Activated B cell treated with CpG ODN at 0.5 μM for 24 hours (primary cell): ENCODE measurements at regions of chr20 and their contacts with region 1.

Region 1: DNA sequence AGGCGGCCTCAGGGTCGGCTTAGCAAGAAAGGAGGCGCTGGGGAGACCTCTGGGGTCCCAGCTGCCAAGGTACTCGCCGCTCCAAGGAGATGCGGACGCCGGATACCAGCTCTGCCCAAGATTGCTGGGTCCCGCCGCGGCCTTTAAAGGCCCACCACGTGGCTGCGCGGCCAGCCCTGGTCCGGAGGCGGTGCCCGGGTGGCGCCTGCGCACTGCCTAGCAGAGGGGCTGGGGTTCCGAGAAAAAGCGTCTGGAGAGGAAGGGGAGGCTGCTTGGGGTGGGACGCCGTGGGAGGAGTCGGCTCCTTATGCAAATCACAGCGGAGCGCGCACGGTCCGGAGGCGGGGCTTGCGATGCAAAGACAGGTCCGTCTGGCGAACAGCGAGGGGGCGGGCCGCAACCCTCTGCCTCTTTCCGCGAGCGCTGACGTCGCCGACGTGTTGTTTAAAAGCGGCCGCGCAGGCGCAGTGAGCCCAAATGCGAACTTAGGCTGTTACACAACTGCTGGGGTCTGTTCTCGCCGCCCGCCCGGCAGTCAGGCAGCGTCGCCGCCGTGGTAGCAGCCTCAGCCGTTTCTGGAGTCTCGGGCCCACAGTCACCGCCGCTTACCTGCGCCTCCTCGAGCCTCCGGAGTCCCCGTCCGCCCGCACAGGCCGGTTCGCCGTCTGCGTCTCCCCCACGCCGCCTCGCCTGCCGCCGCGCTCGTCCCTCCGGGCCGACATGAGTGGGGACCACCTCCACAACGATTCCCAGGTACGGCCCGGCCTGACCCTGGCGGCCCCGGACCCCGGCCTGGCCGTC is at the start of gene TOP1:
- DNase-seq: peak; percentile 98
- ATAC-seq: peak; percentile 98
- H3K4me3 Mint-ChIP-seq: peak within 1 kb of the TSS; percentile 93
- H3K27ac Mint-ChIP-seq: peak within 1 kb of the TSS; percentile 90
- H3K4me1 Mint-ChIP-seq: peaks cover 57% of the 10 kb centered on the region
- H3K27me3 Mint-ChIP-seq: no peaks in the 10 kb centered on the region
- CTCF ChIP-seq: no peak
- total RNA-seq, gene TOP1: 62.7 and 63.3 TPM in 2 replicates

Region 2: GRCh38 chr20:40880063-40880728 is 148.4 kb before region 1 on chr20:
- CTCF ChIA-PET with region 1: no interaction called
- POLR2A ChIA-PET with region 1: no interaction called
- intact Hi-C with region 1: no loop called
- DNase-seq: no peak
- ATAC-seq: no peak
- H3K4me3 Mint-ChIP-seq: no peak overlapping the region
- H3K27ac Mint-ChIP-seq: no peak overlapping the region
- H3K4me1 Mint-ChIP-seq: no peaks in the 10 kb centered on the region
- H3K27me3 Mint-ChIP-seq: no peaks in the 10 kb centered on the region
- CTCF ChIP-seq: no peak

Region 3: DNA sequence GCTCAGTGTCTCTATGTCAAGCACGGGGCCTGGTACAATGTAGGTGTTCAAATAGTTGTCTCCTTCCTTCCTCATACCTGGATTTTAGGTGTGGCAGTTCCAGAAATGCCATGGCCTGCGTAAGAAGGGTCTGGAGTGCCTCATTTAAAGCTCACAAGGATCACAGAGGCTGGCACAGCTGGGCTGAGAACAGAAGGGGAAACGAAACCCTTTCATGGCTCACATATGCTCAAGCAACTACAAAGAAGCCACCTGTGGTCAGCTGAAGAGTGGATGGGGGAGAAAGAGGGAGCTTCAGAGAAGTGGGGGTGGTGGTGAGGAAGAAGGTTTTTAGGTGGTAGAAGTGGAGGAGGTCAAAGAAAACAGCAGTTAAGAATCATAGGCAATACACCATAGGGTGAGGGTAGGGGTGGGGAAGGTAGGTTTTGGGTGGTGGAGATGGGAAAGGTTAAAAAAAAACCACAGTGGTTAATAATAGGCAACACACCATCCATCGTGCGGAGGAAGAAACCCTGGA is 16.9 kb before region 1 on chr20:
- CTCF ChIA-PET with region 1: interaction called, 4 read pairs
- POLR2A ChIA-PET with region 1: interaction called, 49 read pairs
- intact Hi-C with region 1: loop called (anchors 1 kb)
- DNase-seq: peak; percentile 40
- ATAC-seq: peak; percentile 94
- H3K4me3 Mint-ChIP-seq: peak overlapping the region; percentile 70
- H3K27ac Mint-ChIP-seq: peak overlapping the region; percentile 84
- H3K4me1 Mint-ChIP-seq: peaks cover 49% of the 10 kb centered on the region
- H3K27me3 Mint-ChIP-seq: no peaks in the 10 kb centered on the region
- CTCF ChIP-seq: no peak

Region 4: GRCh38 chr20:41047975-41048305 is 19.4 kb after region 1 on chr20:
- CTCF ChIA-PET with region 1: interaction called, 4 read pairs
- POLR2A ChIA-PET with region 1: interaction called, 14 read pairs
- intact Hi-C with region 1: loop called (anchors 1 kb)
- DNase-seq: no peak
- ATAC-seq: peak; percentile 76
- H3K4me3 Mint-ChIP-seq: peak overlapping the region; percentile 73
- H3K27ac Mint-ChIP-seq: peak overlapping the region; percentile 80
- H3K4me1 Mint-ChIP-seq: peaks cover 85% of the 10 kb centered on the region
- H3K27me3 Mint-ChIP-seq: no peaks in the 10 kb centered on the region
- CTCF ChIP-seq: no peak

Region 5: GRCh38 chr20:41064377-41064776 is 35.8 kb after region 1 on chr20:
- CTCF ChIA-PET with region 1: interaction called, 3 read pairs
- POLR2A ChIA-PET with region 1: no interaction called
- intact Hi-C with region 1: loop called (anchors 5 kb)
- DNase-seq: no peak
- ATAC-seq: peak; percentile 62
- H3K4me3 Mint-ChIP-seq: peak overlapping the region; percentile 33
- H3K27ac Mint-ChIP-seq: no peak overlapping the region
- H3K4me1 Mint-ChIP-seq: peaks cover 52% of the 10 kb centered on the region
- H3K27me3 Mint-ChIP-seq: no peaks in the 10 kb centered on the region
- CTCF ChIP-seq: no peak

Region 6: GRCh38 chr20:41249406-41250281 is 221.1 kb after region 1 on chr20:
- CTCF ChIA-PET with region 1: no interaction called
- POLR2A ChIA-PET with region 1: no interaction called
- intact Hi-C with region 1: no loop called
- DNase-seq: no peak
- ATAC-seq: peak; percentile 86
- H3K4me3 Mint-ChIP-seq: peak overlapping the region; percentile 56
- H3K27ac Mint-ChIP-seq: peak overlapping the region; percentile 84
- H3K4me1 Mint-ChIP-seq: peaks cover 62% of the 10 kb centered on the region
- H3K27me3 Mint-ChIP-seq: no peaks in the 10 kb centered on the region
- CTCF ChIP-seq: no peak

Region 7: GRCh38 chr20:41317536-41318270 is 289.2 kb after region 1 on chr20 and contains the start of gene ZHX3:
- CTCF ChIA-PET with region 1: no interaction called
- POLR2A ChIA-PET with region 1: no interaction called
- intact Hi-C with region 1: loop called (anchors 1 kb)
- DNase-seq: peak; percentile 99
- ATAC-seq: peak; percentile 97
- H3K4me3 Mint-ChIP-seq: peak within 1 kb of the TSS; percentile 91
- H3K27ac Mint-ChIP-seq: peak within 1 kb of the TSS; percentile 87
- H3K4me1 Mint-ChIP-seq: peaks cover 23% of the 10 kb centered on the region
- H3K27me3 Mint-ChIP-seq: no peaks in the 10 kb centered on the region
- CTCF ChIP-seq: no peak
- total RNA-seq, gene ZHX3: 19.5 and 21.2 TPM in 2 replicates